ENCODE measurements at regions of chr1 and their contacts with region 1.

Region 1: GRCh38 chr1:216653031-216653430 is 70.2 kb downstream of the ESRRG start:
- DNase-seq: no peak
- ATAC-seq: no peak
- H3K4me3 ChIP-seq: no peak overlapping the region
- H3K27ac ChIP-seq: no peak overlapping the region
- H3K4me1 ChIP-seq: no peaks in the 10 kb centered on the region
- H3K27me3 ChIP-seq: no peaks in the 10 kb centered on the region
- CTCF ChIP-seq: no peak

Region 2: GRCh38 chr1:218312509-218312908 is 1659.5 kb after region 1 on chr1:
- CTCF ChIA-PET with region 1: interaction called, 11 read pairs
- POLR2A ChIA-PET with region 1: no interaction called
- in situ Hi-C with region 1: no loop called
- intact Hi-C with region 1: no loop called
- DNase-seq: no peak
- ATAC-seq: no peak
- H3K4me3 ChIP-seq: no peak overlapping the region
- H3K27ac ChIP-seq: no peak overlapping the region
- H3K4me1 ChIP-seq: 0 out of 2 replicates have a peak, but pooled peaks cover 2% of the 10 kb centered on the region
- H3K27me3 ChIP-seq: no peaks in the 10 kb centered on the region
- CTCF ChIP-seq: no peak